ENCODE measurements at regions of chr10 and their contacts with region 1.

Region 1: DNA sequence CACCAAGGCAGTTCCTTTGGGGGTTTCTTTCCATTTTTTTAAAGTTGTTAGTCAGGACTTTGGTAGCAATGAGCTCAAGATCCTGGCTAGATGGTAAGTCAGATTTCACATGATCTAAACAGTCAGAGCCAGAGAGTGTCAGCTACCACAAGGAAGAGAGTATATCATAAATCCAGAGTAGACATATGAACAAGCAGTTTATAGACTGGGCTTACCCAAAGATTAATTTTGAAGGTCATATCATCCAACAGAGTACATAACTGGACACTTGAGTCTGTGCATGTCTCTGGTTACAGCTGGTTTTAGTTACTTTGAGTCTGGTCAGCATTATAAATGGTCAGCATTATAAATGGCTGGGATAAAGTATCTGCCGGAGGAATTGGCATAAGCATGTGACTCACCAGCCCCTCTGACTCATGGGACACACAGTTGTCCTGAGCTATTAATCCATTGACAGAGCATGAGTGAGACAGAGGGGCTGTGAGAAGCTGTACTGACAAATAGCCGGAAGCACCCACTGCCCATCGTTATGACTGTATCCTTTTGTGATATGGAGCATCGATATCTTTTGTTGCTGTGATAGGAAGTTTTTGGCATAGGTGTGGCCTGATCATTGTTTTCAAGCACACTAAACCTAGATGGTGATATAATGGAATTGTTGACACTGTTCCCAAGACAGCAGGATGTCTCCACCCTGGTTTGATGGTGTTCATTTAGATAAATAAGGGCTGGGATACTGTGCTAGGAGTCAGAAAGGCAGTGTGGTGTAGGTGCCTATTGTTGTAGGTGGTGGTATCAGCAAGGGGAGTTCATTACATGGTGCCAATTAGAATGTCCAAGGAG is 19.2 kb downstream of the PPP1R3C start:
- DNase-seq: peak; percentile 40 to 82
- H3K4me3 ChIP-seq: no peak overlapping the region
- H3K27ac ChIP-seq: peak overlapping the region; percentile 58
- H3K4me1 ChIP-seq: peaks cover 43% of the 10 kb centered on the region
- H3K27me3 ChIP-seq: no peaks in the 10 kb centered on the region
- CTCF ChIP-seq: no peak

Region 2: GRCh38 chr10:90871766-90872647 is 741.6 kb before region 1 on chr10 and contains the start of gene RPP30:
- CTCF ChIA-PET with region 1: interaction called, 15 read pairs
- POLR2A ChIA-PET with region 1: no interaction called
- intact Hi-C with region 1: no loop called
- DNase-seq: peak; percentile 68 to 70
- H3K4me3 ChIP-seq: peak within 1 kb of the TSS; percentile 78
- H3K27ac ChIP-seq: no peak within 1 kb of the TSS
- H3K4me1 ChIP-seq: peaks cover 15% of the 10 kb centered on the region
- H3K27me3 ChIP-seq: no peaks in the 10 kb centered on the region
- CTCF ChIP-seq: no peak
- total RNA-seq, gene RPP30: 25.4 and 32.4 TPM in 2 replicates

Region 3: GRCh38 chr10:92177546-92177945 is 563.9 kb after region 1 on chr10:
- CTCF ChIA-PET with region 1: no interaction called
- POLR2A ChIA-PET with region 1: no interaction called
- intact Hi-C with region 1: no loop called
- DNase-seq: no peak
- H3K4me3 ChIP-seq: no peak overlapping the region
- H3K27ac ChIP-seq: no peak overlapping the region
- H3K4me1 ChIP-seq: no peaks in the 10 kb centered on the region
- H3K27me3 ChIP-seq: no peaks in the 10 kb centered on the region
- CTCF ChIP-seq: no peak